ENCODE measurements at regions of chr6 and their contacts with region 1.

Region 1: DNA sequence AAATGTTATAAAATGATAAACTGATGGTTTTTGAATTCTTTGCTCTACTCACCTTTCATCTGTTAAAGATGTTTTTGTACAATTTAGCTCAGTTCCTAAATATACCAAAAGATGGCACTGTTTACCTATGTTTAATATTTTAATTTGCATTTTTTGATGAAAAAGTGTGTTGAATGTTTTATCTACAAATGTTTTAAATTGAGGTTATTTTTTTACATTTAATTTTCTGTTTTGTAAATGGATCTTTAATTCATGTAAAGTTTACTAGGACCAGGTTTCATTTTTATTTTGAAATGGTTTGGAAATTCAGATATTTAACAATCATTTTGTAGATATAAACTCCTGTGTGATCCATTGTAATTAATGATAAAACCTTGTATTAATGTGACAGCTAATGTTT is 30.0 kb downstream of the CDKAL1 start:
- DNase-seq: peak; percentile 38
- H3K4me3 ChIP-seq: peak overlapping the region; percentile 39
- H3K27ac ChIP-seq: peak overlapping the region; percentile 48
- H3K4me1 ChIP-seq: peaks cover 22% of the 10 kb centered on the region
- CTCF ChIP-seq: peak; percentile 92

Region 2: DNA sequence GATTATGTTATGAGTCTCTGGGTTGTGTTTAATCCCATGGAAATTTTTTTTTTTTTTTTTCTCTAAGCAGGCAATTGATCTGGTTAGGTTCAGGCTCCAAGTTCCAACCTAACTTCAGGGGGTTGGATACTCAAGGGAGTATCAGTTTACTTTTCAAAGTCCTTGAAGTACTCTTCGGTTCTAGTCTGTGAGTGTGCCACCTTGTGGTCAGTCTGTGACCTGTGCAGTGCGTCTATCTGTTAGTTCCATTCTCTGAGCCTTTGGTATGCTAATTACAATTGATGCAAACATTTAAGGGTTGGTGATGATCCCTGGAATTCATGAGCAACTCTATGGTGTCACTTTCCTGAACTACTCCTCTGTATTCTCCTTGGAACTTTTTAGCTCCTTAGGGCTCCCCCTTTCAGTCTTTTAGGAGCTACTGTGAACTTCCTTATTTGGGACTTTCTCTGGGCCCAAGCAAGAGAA is 1371.3 kb after region 1 on chr6:
- CTCF ChIA-PET with region 1: no interaction called
- POLR2A ChIA-PET with region 1: no interaction called
- intact Hi-C with region 1: loop called (anchors 10 kb)
- DNase-seq: peak; percentile 68
- H3K4me3 ChIP-seq: no peak overlapping the region
- H3K27ac ChIP-seq: no peak overlapping the region
- H3K4me1 ChIP-seq: no peaks in the 10 kb centered on the region
- CTCF ChIP-seq: peak; percentile 91